ENCODE measurements at regions of chr19 and their contacts with region 1.

Region 1: GRCh38 chr19:1540365-1540925 is 16.6 kb downstream of the PLK5 start:
- DNase-seq: no peak
- H3K4me3 ChIP-seq: peak overlapping the region; percentile 14
- H3K27ac ChIP-seq: peak overlapping the region; percentile 36
- H3K4me1 ChIP-seq: peaks cover 19% of the 10 kb centered on the region
- H3K27me3 ChIP-seq: peaks cover 63% of the 10 kb centered on the region
- CTCF ChIP-seq: no peak

Region 2: DNA sequence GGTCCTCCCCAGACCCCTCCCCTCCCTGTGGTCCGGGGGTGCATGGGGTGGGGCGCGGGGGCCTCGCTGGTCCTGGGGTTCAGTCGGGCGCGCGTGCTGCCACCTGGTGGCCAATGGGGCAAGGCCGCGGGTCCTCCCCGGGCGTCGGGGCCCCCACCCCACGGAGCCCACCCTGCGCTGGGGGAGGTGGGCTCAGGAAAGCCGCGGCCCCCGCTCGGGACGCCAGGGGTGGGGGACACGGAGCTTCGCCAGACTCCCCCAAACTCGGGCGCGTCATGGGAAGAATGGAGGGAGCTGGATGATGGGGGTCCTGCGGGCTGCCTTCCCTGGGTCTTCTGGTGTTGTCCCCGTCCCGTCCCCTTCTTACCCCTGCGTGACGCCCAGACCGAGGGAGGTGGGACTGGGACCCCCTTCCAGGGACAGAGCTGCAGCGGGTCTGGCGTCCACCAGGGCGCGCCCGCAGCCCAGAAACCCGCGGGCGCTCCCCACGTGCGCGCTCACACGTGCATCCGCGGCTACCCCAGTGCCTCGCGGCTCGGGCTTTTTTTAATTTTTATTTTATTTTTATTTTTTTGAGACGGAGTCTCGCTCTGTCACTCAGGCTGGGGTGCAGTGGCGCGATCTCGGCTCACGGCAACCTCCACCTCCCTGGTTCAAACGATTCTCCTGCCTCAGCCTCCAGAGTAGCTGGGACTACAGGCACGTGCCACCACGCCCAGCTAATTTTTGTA is 131.8 kb after region 1 on chr19:
- intact Hi-C with region 1: loop called (anchors 10 kb)
- DNase-seq: no peak
- H3K4me3 ChIP-seq: peak overlapping the region; percentile 21
- H3K27ac ChIP-seq: no peak overlapping the region
- H3K4me1 ChIP-seq: peaks cover 23% of the 10 kb centered on the region
- H3K27me3 ChIP-seq: peaks cover 94% of the 10 kb centered on the region
- CTCF ChIP-seq: peak; percentile 83

Region 3: GRCh38 chr19:1767464-1767933 is 227.1 kb after region 1 on chr19:
- intact Hi-C with region 1: loop called (anchors 10 kb)
- DNase-seq: peak; percentile 33
- H3K4me3 ChIP-seq: no peak overlapping the region
- H3K27ac ChIP-seq: no peak overlapping the region
- H3K4me1 ChIP-seq: peaks cover 3% of the 10 kb centered on the region
- H3K27me3 ChIP-seq: peaks cover 100% of the 10 kb centered on the region
- CTCF ChIP-seq: peak; percentile 95